Right cardiac atrium (tissue), 5 donors: ENCODE measurements at regions of chr6 and their contacts with region 1.

Region 1: DNA sequence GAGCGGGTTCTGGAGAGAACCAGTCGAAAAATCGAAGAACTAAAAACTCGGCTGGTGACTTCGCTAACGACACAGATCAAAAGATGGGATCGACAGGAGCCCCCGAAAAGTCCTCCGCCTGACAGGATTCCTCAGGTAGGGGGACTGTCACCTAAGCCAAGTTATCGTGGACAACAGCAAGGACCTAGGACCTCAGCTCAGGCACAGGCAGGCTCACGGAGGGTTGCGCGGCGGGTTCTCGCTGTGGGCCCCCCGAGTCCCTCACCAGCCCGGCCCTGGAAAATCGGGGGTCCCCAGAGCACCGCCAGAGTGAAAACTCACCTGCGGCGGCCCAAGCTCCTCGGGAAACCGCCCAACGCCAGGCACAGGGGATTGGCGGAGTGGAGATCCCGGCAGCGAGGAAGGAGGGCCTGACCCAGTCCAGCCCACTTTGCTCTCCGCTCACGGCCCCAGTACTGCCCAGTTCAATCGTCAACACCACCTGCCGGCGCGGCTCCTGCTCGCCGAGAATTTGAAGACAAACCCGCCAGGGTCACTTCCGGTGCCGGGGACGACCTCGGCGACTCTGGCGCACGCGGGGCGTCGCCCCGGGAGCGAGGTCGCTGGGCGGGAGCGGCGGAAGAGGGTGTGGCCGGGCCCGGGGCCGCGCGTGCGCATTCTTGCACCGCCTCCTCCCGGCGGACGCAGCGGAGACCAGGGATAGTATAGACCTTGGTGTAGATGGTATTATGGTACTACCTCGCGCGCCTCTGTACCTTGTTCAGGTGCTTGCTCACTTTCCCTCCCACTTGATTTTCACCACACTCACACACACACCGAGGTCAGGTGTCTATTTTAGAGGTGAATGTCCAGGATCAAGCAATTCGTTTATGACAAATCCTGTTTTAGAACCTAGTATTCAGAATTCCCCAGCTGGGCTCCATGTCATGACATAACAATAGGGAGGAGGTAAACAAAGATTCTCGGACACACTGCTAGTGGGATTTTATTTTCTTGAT is at the start of gene KATNA1:
- DNase-seq: peak; percentile 88 to 95 (median 93)
- ATAC-seq: peak; percentile 98
- H3K4me3 ChIP-seq: peak within 1 kb of the TSS; percentile 74
- H3K27ac ChIP-seq: peak within 1 kb of the TSS; percentile 45
- H3K4me1 ChIP-seq: peaks cover 2% of the 10 kb centered on the region
- H3K27me3 ChIP-seq: no peaks in the 10 kb centered on the region
- total RNA-seq, gene KATNA1: 9.9 to 13.4 (median 13.1) TPM

Region 2: DNA sequence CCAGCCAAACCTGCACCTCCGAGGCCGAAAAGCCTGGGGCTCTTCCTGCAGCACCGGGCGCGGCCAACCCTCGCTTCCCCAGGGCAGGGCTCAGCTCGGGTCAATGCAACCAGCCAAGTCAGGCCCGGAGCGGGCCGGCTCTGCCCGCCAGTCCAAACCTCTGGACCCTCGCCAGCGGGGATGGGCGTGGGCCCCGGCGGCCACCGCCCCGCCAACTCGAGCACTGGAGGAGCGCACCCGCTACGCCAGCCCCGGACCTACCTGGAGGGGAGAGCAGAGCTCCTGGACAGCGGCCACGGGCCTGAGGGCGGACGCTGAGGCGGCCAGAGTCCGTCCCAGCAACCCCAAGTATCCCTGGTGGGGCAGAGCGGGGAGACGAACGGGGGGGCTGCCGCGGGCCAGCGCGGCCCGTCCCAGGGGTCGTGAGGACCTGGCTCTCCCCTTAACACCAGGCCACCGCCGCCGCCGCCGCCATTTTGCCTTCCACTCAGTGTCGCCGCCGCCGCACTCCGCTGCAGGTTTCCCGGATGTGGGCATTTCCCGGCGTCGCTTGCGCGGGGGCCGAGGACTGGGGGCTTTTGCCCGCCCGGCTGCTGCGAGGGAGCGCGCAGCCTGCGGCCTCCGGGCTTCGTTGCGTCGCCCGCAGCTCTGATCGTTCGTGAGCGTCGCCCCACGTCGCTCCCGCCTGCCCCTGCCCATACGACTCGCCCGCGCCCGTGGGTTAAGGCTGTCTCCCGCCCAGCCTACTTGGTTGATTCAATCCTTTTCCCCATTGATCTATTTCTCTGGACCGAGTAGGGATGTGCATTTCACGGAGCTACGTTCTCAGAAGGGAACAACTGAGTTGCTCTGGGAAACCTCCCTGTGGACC is 69.4 kb after region 1 on chr6 and contains the start of gene LATS1:
- intact Hi-C with region 1: loop called in 1 of 4 experiments (anchors 10 kb)
- DNase-seq: peak; percentile 95 to 98 (median 97)
- ATAC-seq: peak; percentile 97
- H3K4me3 ChIP-seq: peak within 1 kb of the TSS; percentile 79
- H3K27ac ChIP-seq: peak within 1 kb of the TSS; percentile 98
- H3K4me1 ChIP-seq: no peaks in the 10 kb centered on the region
- H3K27me3 ChIP-seq: no peaks in the 10 kb centered on the region
- total RNA-seq, gene LATS1: 13.5 to 19.0 (median 14.5) TPM